ENCODE measurements at regions of chr3 and their contacts with region 1.

Region 1: DNA sequence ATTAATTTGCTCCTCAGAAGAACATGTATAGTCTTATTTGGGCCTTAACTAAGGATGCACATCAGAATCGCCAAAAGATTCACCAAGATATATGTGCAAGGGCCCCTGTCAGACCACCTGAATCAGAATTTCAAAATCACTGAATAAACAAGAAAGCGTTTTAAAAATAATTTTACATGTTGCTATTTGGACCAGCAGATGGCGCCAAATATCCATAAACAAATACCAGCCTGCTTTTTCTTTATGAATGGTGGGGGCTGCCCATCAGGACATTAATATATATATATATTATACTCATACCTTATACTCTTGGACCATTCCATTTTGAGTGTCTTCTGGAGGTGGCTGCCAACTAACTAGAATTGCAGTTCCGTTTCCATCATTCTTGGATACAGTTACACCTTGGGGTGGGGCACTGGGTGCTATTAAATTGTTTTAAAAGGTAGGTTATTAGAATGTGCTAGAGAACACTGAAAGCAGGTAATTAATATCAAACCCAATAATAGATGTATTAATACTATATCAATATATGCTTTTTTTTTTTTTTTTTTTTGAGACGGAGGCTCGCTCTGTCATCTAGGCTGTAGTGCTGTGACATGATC is 1108.3 kb downstream of the ROBO1 start:
- DNase-seq: peak; percentile 31
- H3K4me3 Mint-ChIP-seq: no peak overlapping the region
- H3K27ac Mint-ChIP-seq: no peak overlapping the region
- H3K4me1 Mint-ChIP-seq: no peaks in the 10 kb centered on the region
- H3K27me3 Mint-ChIP-seq: no peaks in the 10 kb centered on the region

Region 2: GRCh38 chr3:79032686-79033318 is 373.3 kb after region 1 on chr3:
- CTCF ChIA-PET with region 1: no interaction called
- intact Hi-C with region 1: loop called (anchors 1 kb)
- DNase-seq: no peak
- H3K4me3 Mint-ChIP-seq: no peak overlapping the region
- H3K27ac Mint-ChIP-seq: no peak overlapping the region
- H3K4me1 Mint-ChIP-seq: no peaks in the 10 kb centered on the region
- H3K27me3 Mint-ChIP-seq: no peaks in the 10 kb centered on the region

Region 3: GRCh38 chr3:79361748-79362378 is 702.4 kb after region 1 on chr3:
- CTCF ChIA-PET with region 1: interaction called, 4 read pairs
- intact Hi-C with region 1: loop called (anchors 1 kb)
- DNase-seq: no peak
- H3K4me3 Mint-ChIP-seq: no peak overlapping the region
- H3K27ac Mint-ChIP-seq: no peak overlapping the region
- H3K4me1 Mint-ChIP-seq: no peaks in the 10 kb centered on the region
- H3K27me3 Mint-ChIP-seq: no peaks in the 10 kb centered on the region

Region 4: DNA sequence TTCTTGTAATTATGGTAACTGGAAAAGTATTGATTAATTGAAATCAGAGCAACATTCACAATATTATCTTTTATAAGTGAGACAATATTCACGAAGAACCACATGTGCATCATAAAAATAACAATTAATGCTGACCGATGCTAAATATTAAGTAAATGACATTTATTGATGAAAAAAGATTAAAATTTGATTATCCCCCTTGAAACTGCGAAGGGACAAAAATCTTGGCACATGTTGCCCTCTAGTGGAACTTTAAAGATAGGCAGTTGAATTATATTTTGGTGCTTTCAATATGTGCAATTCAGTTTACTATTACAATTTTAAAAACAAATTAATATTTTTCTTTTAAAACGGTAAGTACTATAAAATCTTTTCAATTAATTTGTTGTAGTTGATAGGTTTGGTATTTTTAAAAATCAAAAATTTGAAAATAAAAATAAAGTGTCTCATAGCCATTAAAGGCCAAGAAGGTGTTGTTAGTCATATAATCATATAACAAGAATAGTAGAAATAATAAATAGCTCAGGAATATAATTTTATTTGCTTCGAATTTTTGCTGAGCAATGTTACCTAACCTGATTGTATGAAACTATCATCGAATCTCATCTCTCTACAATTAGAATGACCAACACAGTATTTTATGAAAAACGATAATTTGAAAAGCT is 838.1 kb after region 1 on chr3:
- CTCF ChIA-PET with region 1: no interaction called
- intact Hi-C with region 1: loop called (anchors 1 kb)
- DNase-seq: no peak
- H3K4me3 Mint-ChIP-seq: no peak overlapping the region
- H3K27ac Mint-ChIP-seq: no peak overlapping the region
- H3K4me1 Mint-ChIP-seq: no peaks in the 10 kb centered on the region
- H3K27me3 Mint-ChIP-seq: no peaks in the 10 kb centered on the region

Measured in activated naive CD4-positive, alpha-beta T cell treated with anti-CD3 and anti-CD28 coated beads for 36 hours (primary cell).